AG04450 (cell line): ENCODE measurements at regions of chr5 and their contacts with region 1.

Region 1: DNA sequence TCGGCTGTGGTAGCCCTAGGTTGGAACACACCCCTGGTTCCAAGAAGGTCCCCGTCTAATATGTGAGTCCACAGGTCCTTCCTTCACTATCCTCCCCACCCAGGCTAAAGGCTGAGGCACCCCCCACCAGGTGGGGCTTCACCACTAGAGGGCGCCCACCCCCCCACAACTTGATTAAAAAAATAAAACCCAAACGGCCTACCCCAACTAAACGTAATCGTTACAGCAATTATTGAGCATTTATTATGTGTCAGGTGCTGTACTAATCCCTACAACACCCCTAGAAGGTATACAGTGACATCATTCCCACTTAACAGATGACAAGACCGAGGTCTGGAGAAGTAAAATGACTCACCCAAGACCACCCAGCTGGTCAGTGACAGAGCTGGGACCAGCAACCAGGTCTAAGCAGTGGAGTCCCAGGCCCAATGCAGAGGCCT is 65.0 kb downstream of the FGF18 start:
- DNase-seq: no peak
- H3K4me3 ChIP-seq: no peak overlapping the region
- H3K27ac ChIP-seq: no peak overlapping the region
- H3K27me3 ChIP-seq: peaks cover 21% of the 10 kb centered on the region
- CTCF ChIP-seq: peak; percentile 70

Region 2: GRCh38 chr5:170638454-170639220 is 845.8 kb before region 1 on chr5:
- CTCF ChIA-PET with region 1: no interaction called
- POLR2A ChIA-PET with region 1: no interaction called
- DNase-seq: no peak
- H3K4me3 ChIP-seq: no peak overlapping the region
- H3K27ac ChIP-seq: no peak overlapping the region
- H3K27me3 ChIP-seq: peaks cover 7% of the 10 kb centered on the region
- CTCF ChIP-seq: peak; percentile 86

Region 3: DNA sequence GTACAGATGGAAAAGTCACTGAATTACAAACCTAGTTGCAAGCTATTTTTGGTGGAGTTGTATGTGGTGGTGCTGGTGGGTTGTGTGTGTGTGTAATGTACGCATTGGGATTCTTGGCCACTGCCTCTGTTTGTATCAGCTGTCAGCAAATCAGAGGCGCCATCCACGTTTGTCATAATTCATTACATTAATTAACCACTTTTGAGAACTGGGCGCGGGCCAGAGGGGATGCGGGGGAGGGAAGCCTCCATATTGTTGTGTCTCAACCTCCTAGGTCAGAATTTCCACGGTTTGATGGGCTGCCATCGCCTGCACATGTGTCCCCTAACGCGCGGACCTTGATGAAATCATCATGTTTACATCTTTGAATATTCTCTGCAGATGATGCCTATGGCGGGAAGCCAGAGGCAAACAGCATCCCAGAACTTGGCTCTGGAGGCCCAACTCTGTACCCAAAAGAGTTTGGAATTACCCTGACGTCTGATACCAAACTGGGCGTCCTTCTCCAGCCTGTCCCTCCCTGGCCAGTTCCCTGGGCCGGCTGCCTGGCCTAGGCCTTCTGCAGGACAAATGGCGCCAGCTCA is 10.2 kb before region 1 on chr5:
- CTCF ChIA-PET with region 1: interaction called, 17 read pairs
- POLR2A ChIA-PET with region 1: no interaction called
- DNase-seq: no peak
- H3K4me3 ChIP-seq: no peak overlapping the region
- H3K27ac ChIP-seq: no peak overlapping the region
- H3K27me3 ChIP-seq: peaks cover 7% of the 10 kb centered on the region
- CTCF ChIP-seq: no peak

Region 4: GRCh38 chr5:171494452-171495121 is 10.1 kb after region 1 on chr5:
- CTCF ChIA-PET with region 1: interaction called, 11 read pairs
- POLR2A ChIA-PET with region 1: no interaction called
- DNase-seq: peak; percentile 16
- H3K4me3 ChIP-seq: no peak overlapping the region
- H3K27ac ChIP-seq: peak overlapping the region; percentile 90
- H3K27me3 ChIP-seq: no peaks in the 10 kb centered on the region
- CTCF ChIP-seq: no peak

Region 5: DNA sequence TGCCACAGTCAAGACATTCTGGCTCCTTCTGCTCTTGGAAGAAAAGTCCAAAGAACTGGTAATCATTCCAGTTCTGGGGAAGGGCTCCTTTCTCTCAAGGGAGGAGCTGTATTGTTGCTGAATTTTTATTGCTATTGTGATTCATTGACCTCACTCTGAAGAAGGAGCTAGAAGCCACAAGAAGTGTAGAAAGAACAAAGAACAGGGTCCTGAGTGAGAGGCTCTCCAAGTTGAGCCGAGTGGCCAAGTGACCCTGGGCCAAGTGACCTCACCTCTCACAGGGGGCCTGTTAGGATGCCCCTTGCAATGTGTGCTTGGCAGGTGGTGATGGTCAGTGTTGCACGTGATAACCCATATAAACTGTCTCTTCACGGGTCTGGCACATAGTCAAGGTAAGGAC is 108.3 kb after region 1 on chr5:
- CTCF ChIA-PET with region 1: interaction called, 13 read pairs
- POLR2A ChIA-PET with region 1: no interaction called
- DNase-seq: no peak
- H3K4me3 ChIP-seq: no peak overlapping the region
- H3K27ac ChIP-seq: no peak overlapping the region
- H3K27me3 ChIP-seq: peaks cover 4% of the 10 kb centered on the region
- CTCF ChIP-seq: no peak